HEK293 (cell line): ENCODE measurements at regions of chr22 and their contacts with region 1.

Region 1: DNA sequence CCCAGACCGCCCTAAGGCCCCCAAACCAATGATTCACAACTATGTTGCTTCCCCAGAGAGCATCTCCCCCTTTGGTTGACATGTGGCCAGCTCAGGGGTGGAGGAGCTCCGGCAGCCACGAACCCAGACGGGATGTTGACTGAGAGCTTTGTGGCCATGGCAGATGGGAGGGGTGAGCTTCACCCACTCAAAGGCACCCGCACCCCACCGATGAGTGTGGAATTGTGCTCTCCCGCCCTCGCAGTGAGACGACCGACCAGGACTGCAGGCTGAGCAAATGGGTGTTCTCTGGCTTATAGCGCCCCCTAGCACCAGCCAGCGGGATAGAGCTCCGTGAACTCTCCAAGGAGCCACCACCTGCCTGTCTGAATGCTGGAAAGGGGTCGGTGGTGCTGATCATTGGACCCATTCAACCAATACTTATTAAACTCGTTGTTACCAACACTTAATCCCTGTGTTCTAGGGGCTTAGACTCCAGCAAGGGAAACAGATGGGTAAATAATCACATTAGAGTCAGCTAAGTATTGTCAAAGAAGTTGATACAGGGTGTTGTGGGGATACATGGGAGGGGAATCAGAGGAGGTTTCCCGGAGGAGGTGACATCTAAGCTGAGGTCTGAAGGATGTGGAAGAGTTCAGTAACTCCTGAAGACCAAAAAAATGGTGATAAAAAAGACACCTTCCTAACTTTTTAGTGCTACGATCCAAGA is 4.5 kb upstream of the TIMP3 start:
- H3K4me3 ChIP-seq: no peak overlapping the region
- H3K27ac ChIP-seq: no peak overlapping the region
- H3K4me1 ChIP-seq: 0 out of 2 replicates have a peak, but pooled peaks cover 2% of the 10 kb centered on the region
- CTCF ChIP-seq: peak; percentile 86

Region 2: DNA sequence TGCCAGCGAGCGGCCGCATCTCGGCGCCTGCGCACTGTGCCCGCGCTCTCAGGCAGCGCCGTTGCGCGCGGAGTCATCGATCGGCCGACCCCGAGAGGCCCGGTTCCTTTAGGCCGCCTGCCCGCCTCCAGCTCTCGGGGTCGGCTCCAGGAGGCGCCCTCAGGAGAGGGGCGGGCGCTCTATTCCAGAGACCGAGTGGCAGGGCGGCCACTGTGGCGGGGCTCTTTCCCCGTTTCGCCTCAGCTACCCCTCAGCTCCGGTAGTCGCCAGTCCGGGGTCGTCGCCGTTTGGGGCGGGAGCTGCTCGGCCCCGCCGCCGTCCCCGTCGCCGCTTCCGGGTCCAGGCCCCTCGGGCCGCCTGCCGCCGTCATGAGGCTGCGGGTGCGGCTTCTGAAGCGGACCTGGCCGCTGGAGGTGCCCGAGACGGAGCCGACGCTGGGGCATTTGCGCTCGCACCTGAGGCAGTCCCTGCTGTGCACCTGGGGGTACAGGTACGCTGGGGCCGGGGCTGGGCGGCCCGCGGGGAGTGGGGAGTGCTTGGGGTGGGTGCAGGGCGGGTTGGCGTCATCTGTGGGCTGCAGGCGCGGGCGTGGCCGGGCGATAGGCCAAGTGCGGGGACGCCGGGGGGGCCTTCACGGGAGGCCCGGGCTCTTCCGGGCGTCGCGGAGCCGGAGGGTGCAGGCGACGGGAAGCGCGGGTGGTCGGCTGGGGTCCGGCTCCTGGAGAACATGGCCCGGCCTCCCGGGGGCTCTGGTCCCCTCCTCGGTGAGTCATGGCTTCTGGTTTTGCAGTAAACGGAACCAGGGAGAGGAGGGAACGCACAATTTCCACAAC is 322.2 kb before region 1 on chr22 and contains the start of gene FBXO7:
- CTCF ChIA-PET with region 1: interaction called, 12 read pairs
- POLR2A ChIA-PET with region 1: interaction called, 10 read pairs
- H3K4me3 ChIP-seq: peak within 1 kb of the TSS; percentile 99
- H3K27ac ChIP-seq: peak within 1 kb of the TSS; percentile 99
- H3K4me1 ChIP-seq: peaks cover 7% of the 10 kb centered on the region
- CTCF ChIP-seq: peak; percentile 80

Region 3: DNA sequence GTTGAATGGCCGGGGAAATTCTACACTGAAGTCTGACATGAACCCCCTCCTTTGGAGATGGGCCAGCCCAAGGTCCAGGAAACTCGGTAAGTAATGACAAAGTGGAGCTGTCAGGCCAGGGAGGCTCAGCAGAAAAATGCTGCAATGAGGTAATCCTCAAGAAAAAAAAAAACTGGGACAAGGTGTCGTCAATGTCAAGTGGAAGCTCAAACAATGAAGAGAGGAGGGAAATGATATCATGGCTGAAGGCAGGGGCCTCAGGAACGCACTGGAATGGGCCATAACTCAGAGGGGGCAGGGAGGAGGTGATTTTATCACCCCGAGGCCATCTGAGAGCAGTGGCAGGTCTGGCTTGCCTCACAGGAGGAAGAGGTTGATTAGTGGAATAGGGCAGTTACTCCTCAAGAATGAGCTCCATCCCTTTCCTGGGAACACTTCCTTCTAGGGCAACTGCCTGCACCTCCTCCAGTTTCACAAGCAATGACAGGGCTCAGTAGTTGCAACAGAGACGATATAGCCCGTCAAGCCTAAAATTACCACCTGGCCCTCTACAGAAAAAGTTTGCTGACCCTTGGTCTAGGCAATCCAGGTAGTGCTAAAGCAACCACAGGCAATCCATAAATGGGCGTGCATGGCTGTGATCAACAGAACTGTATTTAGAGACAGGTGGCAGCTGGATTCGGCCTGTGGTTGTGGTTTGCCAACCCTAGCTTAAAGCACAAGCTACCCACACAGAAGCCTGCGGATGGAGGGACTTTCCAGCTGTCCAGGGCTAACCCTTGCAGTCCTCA is 257.2 kb before region 1 on chr22:
- CTCF ChIA-PET with region 1: interaction called, 11 read pairs
- POLR2A ChIA-PET with region 1: interaction called, 9 read pairs
- H3K4me3 ChIP-seq: no peak overlapping the region
- H3K27ac ChIP-seq: no peak overlapping the region
- H3K4me1 ChIP-seq: peaks cover 2% of the 10 kb centered on the region
- CTCF ChIP-seq: no peak

Region 4: GRCh38 chr22:32649515-32650200 is 147.4 kb before region 1 on chr22:
- CTCF ChIA-PET with region 1: interaction called, 251 read pairs
- POLR2A ChIA-PET with region 1: no interaction called
- H3K4me3 ChIP-seq: no peak overlapping the region
- H3K27ac ChIP-seq: no peak overlapping the region
- H3K4me1 ChIP-seq: no peaks in the 10 kb centered on the region
- CTCF ChIP-seq: no peak

Region 5: GRCh38 chr22:32712644-32713355 is 84.2 kb before region 1 on chr22:
- CTCF ChIA-PET with region 1: interaction called, 11 read pairs
- POLR2A ChIA-PET with region 1: no interaction called
- H3K4me3 ChIP-seq: no peak overlapping the region
- H3K27ac ChIP-seq: no peak overlapping the region
- H3K4me1 ChIP-seq: no peaks in the 10 kb centered on the region
- CTCF ChIP-seq: no peak

Region 6: DNA sequence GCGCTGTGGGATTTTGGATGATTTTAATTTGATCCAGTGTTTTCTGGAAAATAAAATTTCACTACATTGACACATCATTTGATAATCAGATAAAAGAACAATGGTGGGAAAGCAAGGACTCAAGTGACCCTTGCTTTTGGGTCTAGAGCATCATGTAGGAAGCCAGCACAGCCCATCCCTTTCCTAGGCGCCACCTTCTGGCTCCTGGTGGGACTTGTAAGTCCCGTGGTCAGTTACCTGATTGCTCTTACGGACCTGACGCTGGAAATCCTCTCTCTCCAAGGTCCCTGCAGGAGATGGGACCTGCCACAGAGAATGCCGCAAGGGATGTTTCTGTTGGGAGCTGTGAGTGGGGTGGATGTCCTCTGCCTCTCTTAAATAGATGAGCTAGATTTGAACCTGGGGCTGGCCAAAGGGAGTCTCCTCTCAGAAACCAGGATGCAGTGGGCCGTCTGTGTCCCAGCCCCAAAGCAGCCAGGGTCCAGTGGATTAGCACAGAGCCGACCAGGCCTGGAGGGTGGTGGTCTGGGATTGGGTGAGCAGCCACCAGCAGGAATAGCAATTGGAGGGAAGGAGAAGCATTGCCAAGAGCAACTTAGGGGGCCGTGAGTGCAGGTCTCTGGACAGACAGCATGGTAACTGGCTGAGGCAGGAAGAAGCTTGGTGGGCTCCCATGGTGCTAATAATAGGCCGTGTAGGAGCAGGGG is 26.2 kb after region 1 on chr22:
- CTCF ChIA-PET with region 1: interaction called, 10 read pairs
- POLR2A ChIA-PET with region 1: interaction called, 3 read pairs
- H3K4me3 ChIP-seq: no peak overlapping the region
- H3K27ac ChIP-seq: no peak overlapping the region
- H3K4me1 ChIP-seq: no peaks in the 10 kb centered on the region
- CTCF ChIP-seq: no peak

Region 7: GRCh38 chr22:32850591-32851517 is 53.8 kb after region 1 on chr22:
- CTCF ChIA-PET with region 1: no interaction called
- POLR2A ChIA-PET with region 1: no interaction called
- H3K4me3 ChIP-seq: no peak overlapping the region
- H3K27ac ChIP-seq: no peak overlapping the region
- H3K4me1 ChIP-seq: peaks cover 5% of the 10 kb centered on the region
- CTCF ChIP-seq: no peak

Region 8: GRCh38 chr22:32991353-32992121 is 194.5 kb after region 1 on chr22:
- CTCF ChIA-PET with region 1: interaction called, 17 read pairs
- POLR2A ChIA-PET with region 1: interaction called, 7 read pairs
- H3K4me3 ChIP-seq: no peak overlapping the region
- H3K27ac ChIP-seq: no peak overlapping the region
- H3K4me1 ChIP-seq: no peaks in the 10 kb centered on the region
- CTCF ChIP-seq: no peak